HEK293 (cell line): ENCODE measurements at regions of chr22 and their contacts with region 1.

Region 1: DNA sequence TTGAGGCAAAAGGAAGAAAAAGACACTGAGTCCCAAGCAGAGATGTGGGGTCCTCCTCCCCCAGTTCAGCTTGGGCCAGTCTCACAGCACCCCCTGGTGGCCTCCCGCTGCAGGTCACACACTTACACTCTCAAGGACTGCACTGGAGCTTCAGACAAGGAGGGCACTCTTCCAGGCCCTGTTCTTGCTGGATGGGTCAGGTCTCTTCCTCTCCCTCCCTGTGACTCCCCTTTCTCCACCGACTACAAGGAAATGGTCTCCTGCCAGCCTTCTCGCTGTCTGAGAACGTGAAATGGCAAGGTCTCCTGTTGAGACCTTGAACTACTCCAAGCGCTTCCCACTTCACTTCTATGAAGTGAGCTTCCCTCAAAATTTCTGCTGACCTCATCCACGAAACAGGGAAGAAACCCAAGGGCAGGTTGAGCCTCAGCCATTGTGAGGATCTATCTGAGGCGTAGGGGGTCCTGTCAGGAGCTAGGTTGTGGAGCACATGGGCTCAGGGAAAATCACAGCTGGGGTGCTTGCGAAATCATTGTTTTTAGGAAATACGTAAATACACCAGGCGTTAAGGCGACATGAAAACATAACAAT is 11.2 kb upstream of the IGLL1 start:
- H3K4me3 ChIP-seq: no peak overlapping the region
- H3K27ac ChIP-seq: no peak overlapping the region
- H3K4me1 ChIP-seq: no peaks in the 10 kb centered on the region
- CTCF ChIP-seq: peak; percentile 80

Region 2: GRCh38 chr22:23178512-23179254 is 412.6 kb before region 1 on chr22:
- CTCF ChIA-PET with region 1: interaction called, 12 read pairs
- POLR2A ChIA-PET with region 1: no interaction called
- H3K4me3 ChIP-seq: no peak overlapping the region
- H3K27ac ChIP-seq: no peak overlapping the region
- H3K4me1 ChIP-seq: no peaks in the 10 kb centered on the region
- CTCF ChIP-seq: peak; percentile 91

Region 3: DNA sequence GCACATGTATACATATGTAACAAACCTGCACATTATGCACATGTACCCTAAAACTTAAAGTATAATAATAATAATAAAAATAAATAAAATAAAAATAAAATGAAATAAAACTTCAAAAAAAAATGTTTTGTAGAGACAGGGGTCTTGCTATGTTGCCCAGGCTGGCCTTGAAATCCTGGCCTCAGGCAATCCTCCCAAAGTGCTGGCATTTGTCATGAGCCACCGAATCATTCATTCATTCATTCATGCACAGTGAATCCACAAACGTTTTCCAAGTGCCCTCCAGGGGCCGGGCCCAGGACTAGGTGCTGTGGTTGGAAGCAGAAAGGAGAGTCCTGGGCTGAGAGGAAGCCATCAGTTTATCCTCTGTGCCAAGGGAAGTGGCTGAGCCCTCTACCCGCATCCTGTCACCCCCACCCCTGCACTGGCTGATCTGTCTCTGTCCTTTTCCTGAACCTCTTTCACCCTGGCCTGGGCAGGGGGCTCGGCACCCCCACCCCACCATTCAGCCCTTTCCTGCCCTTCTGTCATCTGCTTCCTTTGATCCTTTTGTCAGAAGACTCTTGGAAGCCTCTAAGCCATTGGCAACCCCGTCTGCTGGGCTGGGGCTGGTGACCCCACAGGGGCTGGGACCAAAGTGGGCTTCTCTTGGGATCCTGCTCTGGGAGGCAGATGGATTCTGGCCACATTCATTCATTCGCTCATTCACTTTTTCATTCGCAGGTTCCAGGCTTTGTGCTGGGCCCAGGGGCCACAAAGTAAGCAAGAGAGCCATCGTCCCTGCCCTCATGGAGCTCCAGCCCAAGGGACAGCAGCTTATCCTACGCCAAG is 95.5 kb before region 1 on chr22:
- CTCF ChIA-PET with region 1: no interaction called
- POLR2A ChIA-PET with region 1: no interaction called
- H3K4me3 ChIP-seq: no peak overlapping the region
- H3K27ac ChIP-seq: no peak overlapping the region
- H3K4me1 ChIP-seq: no peaks in the 10 kb centered on the region
- CTCF ChIP-seq: no peak

Region 4: DNA sequence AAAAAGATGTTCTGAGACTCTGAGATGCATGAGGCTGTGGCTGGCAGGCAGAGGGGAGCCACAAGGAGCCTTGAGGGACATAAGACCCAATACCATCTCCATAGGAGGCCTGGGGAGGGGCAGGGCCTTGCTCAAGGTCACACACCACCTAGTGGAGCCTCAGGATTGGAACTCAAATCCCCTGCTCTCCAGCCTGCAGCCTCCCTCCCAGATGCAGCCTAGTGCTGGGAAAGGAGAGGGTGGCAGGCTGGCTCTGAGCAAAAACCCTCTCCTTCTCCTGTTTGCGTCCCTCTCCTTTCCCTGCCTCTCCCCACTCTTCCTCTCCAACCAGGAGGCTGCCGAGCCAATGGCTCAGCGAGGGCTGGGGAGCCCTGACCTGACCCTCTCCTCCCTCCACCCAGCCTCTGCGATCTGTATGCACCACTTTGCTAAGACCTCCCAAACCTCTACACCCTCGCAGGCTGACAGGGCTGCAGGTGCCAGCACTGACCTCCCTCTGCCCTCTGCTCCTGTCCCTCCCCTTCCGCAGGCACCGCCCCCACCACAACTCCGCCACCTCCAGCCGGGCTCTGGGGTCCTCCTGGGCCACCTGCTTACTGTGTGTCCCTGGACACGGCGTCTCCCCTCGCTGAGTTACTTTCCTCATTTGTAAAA is 25.9 kb before region 1 on chr22:
- CTCF ChIA-PET with region 1: interaction called, 19 read pairs
- POLR2A ChIA-PET with region 1: no interaction called
- H3K4me3 ChIP-seq: no peak overlapping the region; the same call in 1 of the 2 replicates
- H3K27ac ChIP-seq: no peak overlapping the region; the same call in 1 of the 2 replicates
- H3K4me1 ChIP-seq: no peaks in the 10 kb centered on the region; the same call in 1 of the 2 replicates
- CTCF ChIP-seq: no peak

Region 5: GRCh38 chr22:23580576-23581259 is 10.6 kb before region 1 on chr22:
- CTCF ChIA-PET with region 1: interaction called, 50 read pairs
- POLR2A ChIA-PET with region 1: no interaction called
- H3K4me3 ChIP-seq: no peak overlapping the region
- H3K27ac ChIP-seq: no peak overlapping the region
- H3K4me1 ChIP-seq: no peaks in the 10 kb centered on the region
- CTCF ChIP-seq: no peak

Region 6: DNA sequence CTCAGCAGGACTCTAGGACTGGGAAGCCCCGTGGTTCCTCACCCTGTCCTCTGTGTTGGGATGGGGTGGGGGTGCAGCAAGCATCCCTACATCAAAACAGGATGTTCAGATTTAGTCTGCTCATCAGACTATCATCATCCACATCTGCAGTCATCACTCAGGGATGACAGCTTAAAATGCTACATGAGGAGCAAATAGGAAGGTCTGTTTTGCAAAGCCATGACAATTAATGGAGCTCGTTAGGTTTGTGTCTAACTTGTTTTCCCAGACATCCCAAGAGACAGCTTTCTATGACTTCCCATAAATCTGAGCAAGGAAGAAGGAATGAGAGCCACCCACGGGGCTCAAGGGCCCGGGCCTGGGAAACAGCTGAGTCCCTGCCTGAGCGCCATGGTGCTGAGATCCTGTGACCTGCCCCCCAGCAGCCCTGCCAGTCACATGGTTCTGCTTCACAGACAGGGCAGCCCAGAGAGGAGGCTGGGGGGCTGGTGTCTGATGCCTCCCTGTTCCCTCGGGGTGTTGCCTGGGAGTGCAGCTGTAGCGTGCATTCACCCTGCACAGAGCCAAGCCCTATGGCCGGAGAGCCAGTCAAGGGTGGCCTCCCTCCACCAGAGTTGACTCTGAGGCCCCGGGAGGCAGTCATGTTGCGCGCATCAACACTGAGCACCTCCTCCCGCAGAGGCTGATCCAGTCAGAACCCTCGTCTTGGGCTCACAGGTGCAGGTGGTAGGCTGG is 235.3 kb after region 1 on chr22:
- CTCF ChIA-PET with region 1: no interaction called
- POLR2A ChIA-PET with region 1: no interaction called
- H3K4me3 ChIP-seq: no peak overlapping the region
- H3K27ac ChIP-seq: peak overlapping the region; percentile 68
- H3K4me1 ChIP-seq: no peaks in the 10 kb centered on the region
- CTCF ChIP-seq: no peak